Dorsolateral prefrontal cortex (tissue), 120 donors: ENCODE measurements at regions of chr5 and their contacts with region 1.

Region 1: DNA sequence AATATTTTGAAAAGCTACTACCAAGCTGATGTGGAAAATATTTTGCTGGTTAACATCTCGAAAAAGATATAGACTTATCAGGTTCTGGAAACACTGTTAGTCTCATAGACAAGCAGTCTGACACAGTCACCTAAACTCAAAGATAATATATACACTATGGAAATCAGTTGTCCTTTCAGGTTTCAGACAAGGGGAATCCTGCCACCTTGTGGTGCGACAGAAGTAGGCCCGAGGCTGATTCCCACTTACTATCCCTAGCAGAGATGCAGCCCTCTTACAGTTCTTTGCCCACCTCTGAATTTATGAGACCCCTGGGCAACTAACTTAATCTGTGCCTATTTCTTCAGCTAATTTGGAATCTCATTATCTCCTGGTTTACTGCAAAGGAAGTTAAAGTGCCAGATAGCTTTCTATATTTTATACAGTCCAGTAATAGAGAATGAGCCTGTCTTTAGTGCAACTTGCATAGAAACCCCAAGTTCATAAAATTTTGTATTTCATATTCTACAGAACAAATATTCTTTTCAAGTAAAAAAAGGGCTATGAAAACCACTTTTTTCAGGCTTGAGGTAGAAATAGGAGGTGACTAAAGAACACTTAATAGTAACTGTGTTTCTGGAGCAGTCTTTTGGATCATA is 16.9 kb downstream of the RAD1 start:
- DNase-seq: peak; percentile 54 to 89 (median 78)
- H3K4me3 ChIP-seq: no peak overlapping the region
- H3K27ac ChIP-seq: peak overlapping the region in 1 of 59 donors; percentile 13
- H3K27me3 ChIP-seq: no peaks in the 10 kb centered on the region
- CTCF ChIP-seq: peak; percentile 79 to 99 (median 93)

Region 2: GRCh38 chr5:34474573-34475021 is 423.8 kb before region 1 on chr5:
- intact Hi-C with region 1: loop called in 1 of 2 experiments (anchors 2 kb)
- DNase-seq: no peak
- H3K4me3 ChIP-seq: no peak overlapping the region
- H3K27ac ChIP-seq: peak overlapping the region in 3 of 59 donors; percentile 18 to 23 (median 22)
- H3K27me3 ChIP-seq: peaks cover 0 to 8% (median 0%) of the 10 kb centered on the region in 45 donors
- CTCF ChIP-seq: peak; percentile 75 to 99 (median 97)

Region 3: DNA sequence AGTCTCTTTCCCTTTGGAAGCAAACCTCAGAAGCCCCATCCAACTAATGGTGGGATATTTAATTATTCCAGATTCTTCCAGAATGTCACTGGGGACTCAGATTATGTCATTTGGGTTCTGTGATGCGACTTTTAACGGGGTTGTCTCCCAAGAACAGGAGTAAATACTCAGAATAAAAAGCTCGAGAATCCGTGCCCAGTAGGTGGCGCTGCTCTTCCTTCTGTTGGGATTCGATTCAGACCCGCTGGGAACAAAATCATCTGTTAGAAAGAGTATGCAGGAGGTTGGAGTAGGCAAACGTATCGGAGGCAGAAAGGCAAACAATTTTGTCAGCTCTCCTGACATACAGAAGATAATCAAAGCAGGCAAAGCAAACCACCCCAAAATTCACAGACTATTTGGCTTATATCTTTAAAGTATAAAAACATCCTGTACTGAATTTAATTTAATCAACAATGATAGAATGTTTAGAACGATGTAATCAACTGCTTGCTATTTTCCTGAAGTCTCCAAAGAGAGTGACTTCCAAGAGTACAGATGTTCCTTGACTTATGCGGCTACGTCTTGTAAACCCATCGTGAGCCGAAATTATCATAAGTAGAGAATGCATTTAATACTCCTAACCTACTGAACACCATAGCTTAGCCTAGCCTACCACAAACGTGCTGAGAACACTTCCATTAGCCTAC is 412.1 kb before region 1 on chr5:
- intact Hi-C with region 1: loop called (anchors 2 to 5 kb)
- DNase-seq: peak; percentile 80 to 94 (median 85)
- H3K4me3 ChIP-seq: peak overlapping the region in 24 of 59 donors; percentile 2 to 43 (median 26)
- H3K27ac ChIP-seq: peak overlapping the region in 48 of 59 donors; percentile 26 to 96 (median 89)
- H3K27me3 ChIP-seq: no peaks in the 10 kb centered on the region
- CTCF ChIP-seq: peak; percentile 77 to 98 (median 90)

Region 4: DNA sequence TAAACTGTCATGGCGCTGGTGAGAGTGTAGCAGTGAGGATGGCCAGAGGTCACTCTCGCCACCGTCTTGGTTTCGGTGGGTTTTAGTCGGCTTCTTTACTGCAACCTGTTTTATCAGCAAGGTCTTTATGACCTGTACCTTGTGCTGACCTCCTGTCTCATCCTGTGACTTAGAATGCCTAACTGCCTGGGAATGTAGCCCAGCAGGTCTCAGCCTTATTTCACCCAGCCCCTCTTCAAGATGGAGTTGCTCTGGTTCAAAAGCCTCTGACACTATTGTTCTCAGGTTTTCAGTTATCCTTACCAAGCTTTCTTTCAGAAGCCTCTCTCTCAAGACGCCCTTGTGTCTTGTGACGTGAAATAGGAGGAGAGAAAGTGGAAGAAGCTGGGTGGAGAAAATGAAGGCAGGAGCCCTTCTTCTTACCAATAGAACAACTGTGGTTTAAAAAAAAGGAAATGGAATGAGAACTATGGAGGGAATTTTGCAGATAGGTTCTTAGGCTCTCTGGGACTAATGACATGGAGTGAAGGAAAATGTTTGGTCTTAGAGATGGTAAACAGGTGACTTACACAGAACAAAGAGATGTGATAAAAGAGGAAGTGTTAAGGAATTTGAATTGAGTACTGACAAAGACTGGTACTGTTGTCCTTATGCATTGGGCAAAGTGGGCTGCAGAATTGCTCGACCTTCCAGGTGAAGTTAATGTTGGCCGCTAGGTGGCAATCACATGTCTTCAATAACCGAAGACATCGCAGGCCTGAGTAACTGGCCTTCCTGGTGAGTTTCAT is 375.6 kb before region 1 on chr5:
- intact Hi-C with region 1: loop called (anchors 1 to 2 kb)
- DNase-seq: peak in 9 of 10 donors; percentile 68 to 83 (median 73)
- H3K4me3 ChIP-seq: no peak overlapping the region
- H3K27ac ChIP-seq: peak overlapping the region in 10 of 59 donors; percentile 8 to 61 (median 40)
- H3K27me3 ChIP-seq: peaks cover 0 to 4% (median 0%) of the 10 kb centered on the region in 45 donors
- CTCF ChIP-seq: peak; percentile 73 to 93 (median 84)

Region 5: DNA sequence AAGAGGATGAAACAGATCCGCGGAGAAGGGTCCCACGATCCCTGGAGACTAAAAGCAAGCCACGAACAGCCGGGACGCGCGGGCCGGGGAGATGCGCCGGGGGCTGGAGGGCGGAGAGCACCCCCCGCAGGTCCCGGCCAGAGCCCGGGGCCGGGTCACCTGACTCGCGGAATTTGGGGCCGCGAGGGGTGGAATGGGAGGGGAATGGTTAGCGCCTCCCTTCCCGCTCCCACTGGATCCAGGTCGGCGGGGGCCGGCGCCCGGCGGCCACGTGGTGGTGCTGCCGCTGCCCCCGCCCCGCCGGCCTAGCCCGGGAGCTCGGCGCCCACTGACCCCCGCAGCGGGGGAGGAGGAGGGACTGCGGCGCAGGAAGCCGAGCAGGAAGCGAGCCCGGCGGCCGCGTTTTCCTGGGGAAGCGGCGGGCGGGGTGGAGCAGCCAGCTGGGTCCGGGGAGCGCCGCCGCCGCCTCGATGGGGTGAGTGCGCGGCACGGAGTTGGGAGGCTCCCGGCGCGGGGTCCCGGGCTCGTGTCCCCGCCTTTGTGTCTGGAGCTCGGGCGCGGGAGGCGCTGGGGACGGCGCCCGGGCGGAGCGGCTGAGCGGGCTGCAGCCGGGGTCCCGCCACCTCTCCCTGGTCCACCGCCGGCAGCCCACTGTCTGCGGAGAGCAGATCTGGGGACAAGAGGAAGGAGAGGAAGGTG is 242.2 kb before region 1 on chr5 and contains the start of gene RAI14:
- intact Hi-C with region 1: loop called (anchors 5 to 10 kb)
- DNase-seq: peak; percentile 37 to 82 (median 59)
- H3K4me3 ChIP-seq: peak within 1 kb of the TSS; percentile 54 to 98 (median 89)
- H3K27ac ChIP-seq: peak within 1 kb of the TSS; percentile 1 to 92 (median 84)
- H3K27me3 ChIP-seq: no peaks in the 10 kb centered on the region
- CTCF ChIP-seq: peak in 25 of 56 donors; percentile 5 to 52 (median 25)
- total RNA-seq, gene RAI14: 5.6 to 30.9 (median 12.5) TPM

Region 6: DNA sequence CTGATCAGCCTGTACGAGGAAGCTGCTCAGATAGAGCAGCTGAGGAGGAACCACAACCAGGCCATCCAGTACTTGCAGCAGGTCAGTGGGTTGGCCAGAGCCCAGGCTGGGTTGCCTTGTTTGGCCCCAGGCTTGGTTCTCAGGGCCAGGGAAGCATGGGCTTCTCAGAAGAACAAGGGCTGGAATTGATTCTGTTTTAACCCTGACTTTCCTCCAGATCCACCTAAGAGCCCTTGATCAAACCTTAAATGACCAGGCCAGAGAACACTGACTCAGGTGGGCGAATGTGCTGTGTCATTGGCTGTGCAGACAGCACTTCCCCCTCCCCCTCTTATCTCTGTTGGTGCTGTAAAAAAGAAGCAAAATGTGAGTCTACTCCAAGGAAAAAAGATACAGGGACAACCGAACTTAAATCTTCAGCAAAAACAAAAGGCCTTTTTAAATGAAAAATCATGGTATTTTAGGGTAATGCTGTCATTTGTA is 31.3 kb before region 1 on chr5:
- intact Hi-C with region 1: loop called in 1 of 2 experiments (anchors 1 kb)
- DNase-seq: peak in 2 of 10 donors; percentile 18 to 47
- H3K4me3 ChIP-seq: peak overlapping the region in 26 of 59 donors; percentile 9 to 62 (median 38)
- H3K27ac ChIP-seq: peak overlapping the region in 36 of 59 donors; percentile 16 to 96 (median 86)
- H3K27me3 ChIP-seq: no peaks in the 10 kb centered on the region
- CTCF ChIP-seq: no peak

Region 7: DNA sequence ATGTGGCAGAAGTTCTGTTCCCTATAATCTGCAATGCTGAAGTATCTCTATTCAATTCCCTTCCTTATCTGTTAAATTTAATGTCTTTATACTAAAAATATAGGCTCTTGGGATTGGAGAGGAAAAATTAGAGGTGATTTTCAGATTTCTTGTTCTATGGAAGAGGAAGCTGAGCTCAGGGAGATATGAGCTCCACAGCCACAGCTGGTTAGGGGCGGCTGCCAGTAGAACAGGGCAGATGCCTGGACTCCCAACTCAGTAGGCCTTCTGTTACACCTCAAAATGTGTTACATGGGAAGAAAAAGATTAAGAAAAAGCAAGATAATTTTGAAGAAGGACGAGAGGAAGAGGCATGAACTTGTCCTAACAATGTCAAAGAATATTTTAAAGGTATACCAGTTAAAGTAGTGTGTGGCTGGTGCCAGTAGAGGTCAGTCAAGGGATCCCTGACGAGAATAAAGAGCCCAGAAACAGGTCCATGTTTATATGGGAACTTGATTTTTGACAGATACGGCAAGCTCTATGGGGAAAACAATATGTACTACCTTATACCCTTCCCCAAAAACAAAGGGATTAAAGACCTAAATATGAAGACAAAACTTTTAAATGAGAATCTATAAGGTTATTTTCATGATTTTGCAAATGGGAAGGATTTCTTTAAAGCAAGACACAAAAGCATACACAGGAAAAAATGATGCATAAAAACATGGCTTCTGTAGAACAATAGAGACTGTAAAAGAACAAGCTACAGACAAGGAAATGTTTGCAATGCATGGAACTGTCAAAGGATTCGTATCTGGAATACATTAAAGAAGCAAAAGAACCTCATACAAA is 59.7 kb after region 1 on chr5:
- intact Hi-C with region 1: no loop called
- DNase-seq: peak in 1 of 10 donors; percentile 35
- H3K4me3 ChIP-seq: no peak overlapping the region
- H3K27ac ChIP-seq: peak overlapping the region in 7 of 59 donors; percentile 7 to 41 (median 17)
- H3K27me3 ChIP-seq: no peaks in the 10 kb centered on the region
- CTCF ChIP-seq: peak in 48 of 56 donors; percentile 9 to 53 (median 38)